Posterior vena cava (tissue), 2 donors: ENCODE measurements at regions of chr3 and their contacts with region 1.

Region 1: DNA sequence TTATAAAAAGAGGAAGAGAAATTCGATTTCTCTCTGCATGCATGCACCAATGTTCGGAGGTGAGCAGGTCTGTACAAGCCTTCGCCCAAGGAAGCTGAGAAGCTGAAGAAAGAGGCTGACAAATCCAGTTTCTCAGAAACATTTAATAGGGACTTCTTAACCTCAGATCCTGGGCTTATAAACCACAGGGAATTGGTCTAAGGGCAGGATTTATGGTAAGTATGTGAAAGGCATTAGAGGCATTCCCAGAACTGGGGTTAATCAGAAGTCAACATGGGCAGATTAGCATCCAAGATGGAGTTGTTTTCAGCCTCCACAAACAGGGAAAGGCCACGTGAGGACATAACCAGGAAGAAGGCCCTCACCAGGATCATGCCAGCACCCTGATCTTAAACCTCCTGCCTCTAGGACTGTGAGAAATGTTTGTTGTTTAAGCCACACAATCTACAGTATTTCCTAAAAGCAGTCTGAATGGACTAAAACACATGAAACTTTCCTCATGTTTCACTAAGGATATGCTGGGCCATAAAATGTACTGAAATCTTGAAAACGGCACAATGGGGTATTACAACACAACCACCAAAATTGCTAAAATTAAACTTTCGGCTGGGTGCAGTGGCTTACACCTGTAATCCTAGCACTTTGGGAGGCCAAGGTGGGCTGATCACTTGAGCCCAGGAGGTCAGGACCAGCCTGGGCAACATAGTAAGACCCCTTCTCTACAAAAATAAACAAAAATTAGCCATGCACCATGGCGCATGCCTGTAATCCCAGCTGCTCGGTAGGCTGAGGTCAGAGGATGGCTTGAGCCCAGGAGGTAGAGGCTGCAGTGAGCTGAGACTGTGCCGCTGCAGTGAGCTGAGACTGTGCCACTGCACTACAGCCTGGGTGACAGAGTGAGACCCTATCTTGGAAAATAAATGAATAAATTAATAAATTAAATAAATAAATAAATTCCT is 11.2 kb downstream of the SHISA5 start:
- DNase-seq: no peak

Region 2: DNA sequence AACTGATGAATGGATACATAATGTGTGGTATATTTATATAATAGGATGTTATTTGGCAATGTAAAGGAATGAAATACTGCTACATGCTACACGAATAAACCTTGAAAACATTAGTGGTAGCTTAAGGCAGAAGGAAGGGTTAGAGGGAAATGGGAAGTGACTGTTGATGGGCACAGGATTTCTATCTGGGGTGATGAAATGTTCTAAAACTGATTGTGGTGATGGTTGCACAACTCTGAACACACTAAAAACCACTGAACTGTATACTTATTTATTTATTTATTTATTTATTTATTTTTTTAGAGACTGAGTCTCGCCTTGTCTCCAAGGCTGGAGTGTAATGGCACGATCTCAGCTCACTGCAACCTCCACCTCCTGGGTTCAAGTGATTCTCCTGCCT is 35.9 kb after region 1 on chr3:
- intact Hi-C with region 1: loop called in 1 of 2 experiments (anchors 1 kb)
- DNase-seq: no peak